GM13977 (cell line): ENCODE measurements at regions of chr12 and their contacts with region 1.

Region 1: GRCh38 chr12:84889818-84890217 is 22.8 kb downstream of the SLC6A15 start:
- DNase-seq: no peak
- CTCF ChIP-seq: no peak

Region 2: GRCh38 chr12:84046859-84047258 is 843.0 kb before region 1 on chr12:
- in situ Hi-C with region 1: no loop called
- DNase-seq: no peak
- CTCF ChIP-seq: no peak

Region 3: DNA sequence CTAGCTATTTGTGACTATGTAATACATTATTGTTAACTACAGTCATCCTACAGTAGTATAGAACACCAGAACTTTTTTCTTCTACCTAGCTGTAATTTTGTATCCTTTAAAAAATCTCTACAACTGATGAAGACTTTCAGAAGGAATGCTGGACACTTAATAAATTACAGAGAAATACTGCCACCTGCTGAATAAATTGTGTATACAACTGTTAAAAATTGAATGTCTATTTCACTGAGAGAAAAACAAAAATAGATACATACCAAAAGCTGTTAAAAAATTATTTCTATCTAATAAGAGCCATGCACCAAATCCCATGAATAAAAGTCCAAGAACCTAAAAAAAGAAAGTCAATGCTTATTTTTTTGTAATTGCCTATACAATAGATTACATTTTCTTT is 139.6 kb after region 1 on chr12:
- in situ Hi-C with region 1: loop called (anchors 10 kb)
- DNase-seq: peak; percentile 7
- CTCF ChIP-seq: peak; percentile 22

Region 4: DNA sequence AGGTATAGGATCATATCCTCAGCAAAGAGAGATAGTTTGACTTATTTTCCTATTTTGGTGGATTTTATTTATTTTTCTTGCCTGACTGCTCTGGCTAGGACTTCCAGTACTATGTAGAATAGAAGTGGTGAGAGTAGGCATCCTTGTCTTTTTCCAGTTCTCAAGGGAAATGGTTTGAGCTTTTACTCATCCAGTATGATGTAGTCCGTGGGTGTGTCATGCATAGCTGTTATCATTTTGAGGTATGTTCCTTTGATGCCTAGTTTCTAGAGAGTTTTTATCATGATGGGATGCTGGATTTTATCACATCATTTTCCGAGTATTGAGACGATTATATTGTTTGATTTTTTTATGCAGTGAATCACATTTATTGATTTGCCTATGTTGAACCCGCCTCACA is 1269.1 kb after region 1 on chr12:
- in situ Hi-C with region 1: no loop called
- DNase-seq: no peak
- CTCF ChIP-seq: no peak